ENCODE measurements at regions of chr15 and their contacts with region 1.

Region 1: GRCh38 chr15:26126070-26126469 is 262.9 kb upstream of the ATP10A start:
- DNase-seq: no peak

Region 2: DNA sequence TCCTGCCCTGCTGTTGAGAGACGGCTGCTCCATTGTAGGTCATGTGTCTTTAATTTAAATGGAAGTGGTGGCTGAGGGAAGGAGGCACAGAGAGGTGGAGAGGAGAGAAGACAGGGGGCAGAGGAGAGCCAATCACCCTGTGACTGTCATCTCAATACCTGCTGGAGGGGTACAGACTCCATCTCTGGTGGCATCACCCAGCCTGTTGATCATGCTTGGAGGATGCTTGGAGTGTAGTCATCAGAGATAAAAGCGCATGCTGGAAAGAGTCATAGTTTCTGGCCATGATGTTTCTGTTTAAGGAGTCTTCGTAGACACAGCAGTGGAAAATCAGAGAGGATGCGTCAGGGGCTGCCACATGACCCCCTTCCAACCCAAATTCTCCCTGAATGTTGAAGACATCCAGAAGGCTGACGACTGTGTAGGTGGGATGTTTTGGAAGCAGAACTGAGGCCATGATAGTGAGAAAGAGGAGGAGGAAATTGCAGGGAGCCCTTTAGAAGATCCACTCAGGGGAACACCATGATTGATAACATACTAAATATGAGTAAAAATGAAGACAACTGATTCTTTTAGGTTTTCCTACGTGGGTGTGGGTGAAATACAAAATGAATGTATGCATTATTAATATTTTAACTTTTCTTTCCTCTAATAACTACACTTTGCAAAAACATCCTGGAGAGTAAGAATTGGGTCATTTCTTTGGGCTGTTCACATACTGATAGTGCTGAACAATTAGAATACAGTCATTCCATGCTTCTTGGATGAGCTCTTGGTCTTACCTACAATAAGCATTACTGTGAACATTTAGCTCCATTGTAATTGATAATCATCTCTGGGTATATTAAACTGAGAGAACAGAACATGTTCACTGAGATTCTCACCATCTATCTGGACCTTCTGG is 52.4 kb before region 1 on chr15:
- intact Hi-C with region 1: no loop called
- DNase-seq: no peak

Region 3: GRCh38 chr15:26095710-26096330 is 30.2 kb before region 1 on chr15:
- intact Hi-C with region 1: loop called in 1 of 2 experiments (anchors 1 kb)
- DNase-seq: no peak

Region 4: GRCh38 chr15:26146199-26146598 is 20.1 kb after region 1 on chr15:
- intact Hi-C with region 1: no loop called
- DNase-seq: no peak